WTC11 (cell line): ENCODE measurements at regions of chr5 and their contacts with region 1.

Region 1: DNA sequence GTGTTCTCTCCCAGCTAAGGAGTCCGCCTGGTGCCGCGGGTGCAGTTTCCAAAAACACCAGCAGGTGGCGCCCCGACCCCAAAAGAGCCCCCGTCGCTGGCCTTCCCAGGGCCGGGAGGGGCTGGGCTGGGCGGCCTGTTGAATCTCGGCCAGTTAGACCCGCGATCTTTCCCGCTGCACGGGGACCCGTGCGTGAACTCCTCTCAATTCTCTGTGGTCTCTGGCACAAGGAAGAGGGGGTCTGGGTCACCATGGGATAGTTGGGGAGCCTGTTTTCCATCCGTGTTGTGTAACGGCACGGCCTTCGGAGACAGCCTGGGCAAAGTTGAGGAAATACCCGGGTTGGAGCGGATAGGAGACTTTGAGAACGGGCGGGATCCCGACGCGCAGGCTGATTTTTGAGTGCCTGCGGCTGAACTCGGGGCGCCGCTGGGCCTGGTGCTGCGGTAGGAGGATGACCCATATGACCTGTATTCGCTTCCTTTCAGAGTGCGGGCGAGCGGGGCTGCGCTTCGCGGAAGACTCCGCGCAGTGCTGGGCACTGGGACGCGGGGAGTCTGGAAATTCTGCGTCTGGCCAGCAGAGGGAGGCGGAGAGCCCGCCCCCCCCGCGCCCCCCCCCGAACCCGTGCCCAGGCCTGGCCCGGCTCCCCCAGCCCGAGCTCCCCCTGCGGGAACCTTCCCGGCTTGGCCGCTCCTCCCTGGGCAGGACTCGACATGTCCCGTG is 7.9 kb upstream of the PSD2 start:
- DNase-seq: peak; percentile 94
- ATAC-seq: peak; percentile 81
- H3K4me3 Mint-ChIP-seq: peak overlapping the region; percentile 91
- H3K27ac Mint-ChIP-seq: no peak overlapping the region
- H3K4me1 Mint-ChIP-seq: peaks cover 4% of the 10 kb centered on the region
- H3K27me3 Mint-ChIP-seq: peaks cover 66% of the 10 kb centered on the region
- CTCF ChIP-seq: peak; percentile 98

Region 2: GRCh38 chr5:139837631-139838422 is 50.1 kb after region 1 on chr5:
- CTCF ChIA-PET with region 1: interaction called, 155 read pairs
- POLR2A ChIA-PET with region 1: no interaction called
- DNase-seq: no peak
- ATAC-seq: no peak
- H3K4me3 Mint-ChIP-seq: no peak overlapping the region
- H3K27ac Mint-ChIP-seq: no peak overlapping the region
- H3K4me1 Mint-ChIP-seq: no peaks in the 10 kb centered on the region
- H3K27me3 Mint-ChIP-seq: peaks cover 17% of the 10 kb centered on the region
- CTCF ChIP-seq: no peak

Region 3: GRCh38 chr5:139856714-139857113 is 69.0 kb after region 1 on chr5:
- CTCF ChIA-PET with region 1: interaction called, 155 read pairs
- POLR2A ChIA-PET with region 1: interaction called, 4 read pairs
- DNase-seq: no peak
- ATAC-seq: no peak
- H3K4me3 Mint-ChIP-seq: no peak overlapping the region
- H3K27ac Mint-ChIP-seq: no peak overlapping the region
- H3K4me1 Mint-ChIP-seq: no peaks in the 10 kb centered on the region
- H3K27me3 Mint-ChIP-seq: peaks cover 3% of the 10 kb centered on the region
- CTCF ChIP-seq: no peak

Region 4: DNA sequence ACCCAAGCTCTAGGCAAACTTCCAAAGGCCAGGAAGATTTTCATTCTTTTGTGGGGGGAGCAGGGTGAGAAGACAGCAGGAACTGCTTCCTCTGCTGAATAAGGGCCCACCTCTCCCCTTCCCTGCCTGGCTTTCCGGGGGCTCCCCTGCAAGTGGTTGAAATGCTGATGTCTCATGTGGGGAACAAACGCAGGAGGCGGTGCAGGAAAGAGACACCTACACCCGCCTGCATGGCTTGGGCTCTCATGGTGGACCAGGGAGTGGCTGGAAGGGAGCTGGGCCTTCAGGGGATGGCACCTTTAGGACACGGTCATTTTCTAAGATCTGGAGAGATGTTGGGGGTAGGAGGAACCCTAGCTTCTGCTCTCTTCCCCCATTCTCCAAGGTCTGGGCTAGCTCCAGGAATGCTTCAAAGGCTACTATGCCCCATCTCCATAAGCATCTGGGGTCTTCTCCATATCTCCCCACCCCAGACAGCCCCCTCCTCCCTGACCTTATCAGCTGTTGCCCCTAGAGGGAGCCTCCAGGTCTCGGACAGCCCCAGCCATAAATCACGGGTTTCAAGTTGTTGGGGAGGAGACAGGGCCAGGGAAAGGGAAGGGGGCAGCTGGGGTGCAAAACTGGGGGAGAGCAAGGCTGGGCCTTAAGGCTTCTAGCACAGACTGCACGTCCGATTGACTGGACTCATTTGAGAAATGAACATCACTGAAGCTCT is 84.5 kb after region 1 on chr5:
- CTCF ChIA-PET with region 1: interaction called, 23 read pairs
- POLR2A ChIA-PET with region 1: no interaction called
- DNase-seq: peak; percentile 45
- ATAC-seq: peak; percentile 73
- H3K4me3 Mint-ChIP-seq: no peak overlapping the region
- H3K27ac Mint-ChIP-seq: no peak overlapping the region
- H3K4me1 Mint-ChIP-seq: peaks cover 19% of the 10 kb centered on the region
- H3K27me3 Mint-ChIP-seq: no peaks in the 10 kb centered on the region; the same call in 1 of the 2 replicates
- CTCF ChIP-seq: 0 out of 2 replicates have a peak, but pooled peaks have one; percentile 24

Region 5: GRCh38 chr5:139955053-139955605 is 167.4 kb after region 1 on chr5:
- CTCF ChIA-PET with region 1: interaction called, 21 read pairs
- POLR2A ChIA-PET with region 1: no interaction called
- DNase-seq: no peak
- ATAC-seq: peak; percentile 68
- H3K4me3 Mint-ChIP-seq: no peak overlapping the region
- H3K27ac Mint-ChIP-seq: no peak overlapping the region
- H3K4me1 Mint-ChIP-seq: peaks cover 33% of the 10 kb centered on the region
- H3K27me3 Mint-ChIP-seq: no peaks in the 10 kb centered on the region
- CTCF ChIP-seq: no peak

Region 6: GRCh38 chr5:140118294-140118936 is 330.7 kb after region 1 on chr5:
- CTCF ChIA-PET with region 1: no interaction called
- POLR2A ChIA-PET with region 1: no interaction called
- DNase-seq: no peak
- ATAC-seq: no peak
- H3K4me3 Mint-ChIP-seq: peak overlapping the region; percentile 26
- H3K27ac Mint-ChIP-seq: peak overlapping the region; percentile 47; the same call in 1 of the 2 replicates
- H3K4me1 Mint-ChIP-seq: peaks cover 40% of the 10 kb centered on the region
- H3K27me3 Mint-ChIP-seq: peaks cover 31% of the 10 kb centered on the region
- CTCF ChIP-seq: no peak

Region 7: GRCh38 chr5:140273401-140273877 is 485.7 kb after region 1 on chr5:
- CTCF ChIA-PET with region 1: no interaction called
- POLR2A ChIA-PET with region 1: no interaction called
- DNase-seq: no peak
- ATAC-seq: no peak
- H3K4me3 Mint-ChIP-seq: no peak overlapping the region
- H3K27ac Mint-ChIP-seq: peak overlapping the region; percentile 11; the same call in 1 of the 2 replicates
- H3K4me1 Mint-ChIP-seq: no peaks in the 10 kb centered on the region
- H3K27me3 Mint-ChIP-seq: no peaks in the 10 kb centered on the region
- CTCF ChIP-seq: no peak